CD8-positive, alpha-beta T cell (primary cell): ENCODE measurements at regions of chr14 and their contacts with region 1.

Region 1: GRCh38 chr14:66944872-66945271 is 244.4 kb upstream of the GARIN2 start:
- DNase-seq: peak in 1 of 9 experiments; percentile 18
- ATAC-seq: no peak
- H3K4me3 ChIP-seq: no peak overlapping the region
- H3K4me3 Mint-ChIP-seq: no peak overlapping the region
- H3K27ac ChIP-seq: no peak overlapping the region
- H3K27ac Mint-ChIP-seq: no peak overlapping the region
- H3K4me1 ChIP-seq: no peaks in the 10 kb centered on the region
- H3K4me1 Mint-ChIP-seq: no peaks in the 10 kb centered on the region
- H3K27me3 ChIP-seq: no peaks in the 10 kb centered on the region
- H3K27me3 Mint-ChIP-seq: no peaks in the 10 kb centered on the region
- CTCF ChIP-seq: no peak

Region 2: GRCh38 chr14:66998013-66998412 is 53.1 kb after region 1 on chr14:
- CTCF ChIA-PET with region 1: no interaction called
- POLR2A ChIA-PET with region 1: no interaction called
- intact Hi-C with region 1: loop called in 1 of 2 experiments (anchors 1 kb)
- DNase-seq: no peak
- ATAC-seq: no peak
- H3K4me3 ChIP-seq: no peak overlapping the region
- H3K4me3 Mint-ChIP-seq: no peak overlapping the region
- H3K27ac ChIP-seq: no peak overlapping the region
- H3K27ac Mint-ChIP-seq: no peak overlapping the region
- H3K4me1 ChIP-seq: no peaks in the 10 kb centered on the region
- H3K4me1 Mint-ChIP-seq: no peaks in the 10 kb centered on the region
- H3K27me3 ChIP-seq: no peaks in the 10 kb centered on the region
- H3K27me3 Mint-ChIP-seq: no peaks in the 10 kb centered on the region
- CTCF ChIP-seq: no peak